CD4-positive, alpha-beta memory T cell (primary cell): ENCODE measurements at regions of chr2 and their contacts with region 1.

Region 1: GRCh38 chr2:157468931-157469708 is 25.2 kb upstream of the CYTIP start:
- DNase-seq: peak; percentile 45 to 80 (median 70)
- H3K4me3 ChIP-seq: peak overlapping the region in 1 of 2 donors; percentile 50
- H3K4me3 Mint-ChIP-seq: peak overlapping the region; percentile 49 to 83 (median 69)
- H3K27ac ChIP-seq: peak overlapping the region; percentile 71
- H3K27ac Mint-ChIP-seq: peak overlapping the region; percentile 93 to 99 (median 98)
- H3K4me1 ChIP-seq: peaks cover 49% of the 10 kb centered on the region
- H3K4me1 Mint-ChIP-seq: peaks cover 49 to 78% (median 60%) of the 10 kb centered on the region in 4 donors
- H3K27me3 ChIP-seq: no peaks in the 10 kb centered on the region
- H3K27me3 Mint-ChIP-seq: no peaks in the 10 kb centered on the region

Region 2: DNA sequence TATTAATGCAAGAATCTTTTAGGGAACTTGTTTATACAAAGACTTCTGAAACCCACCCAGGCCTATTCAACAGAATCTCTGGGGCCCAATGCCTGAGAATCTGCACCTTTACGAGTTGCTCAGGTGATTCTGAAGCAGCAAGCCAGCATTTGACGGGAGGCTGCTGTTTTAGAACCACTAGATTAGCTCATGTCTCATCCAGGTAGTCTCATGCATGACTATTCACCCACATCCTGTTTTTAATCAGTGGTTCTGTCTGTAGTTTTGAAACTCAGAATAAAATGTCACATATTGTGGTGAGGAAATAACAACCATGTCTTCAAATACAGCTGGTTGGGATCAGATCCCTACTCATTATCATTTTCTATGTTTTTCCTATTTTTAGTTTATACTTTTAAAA is 64.8 kb before region 1 on chr2:
- CTCF ChIA-PET with region 1: interaction called, 4 read pairs
- POLR2A ChIA-PET with region 1: interaction called, 6 read pairs
- intact Hi-C with region 1: loop called (anchors 2 kb)
- DNase-seq: peak; percentile 79 to 87 (median 85)
- H3K4me3 ChIP-seq: no peak overlapping the region
- H3K4me3 Mint-ChIP-seq: peak overlapping the region; percentile 49 to 85 (median 68)
- H3K27ac ChIP-seq: peak overlapping the region; percentile 51
- H3K27ac Mint-ChIP-seq: peak overlapping the region; percentile 95 to 100 (median 99)
- H3K4me1 ChIP-seq: peaks cover 60% of the 10 kb centered on the region
- H3K4me1 Mint-ChIP-seq: peaks cover 52 to 76% (median 63%) of the 10 kb centered on the region in 4 donors
- H3K27me3 ChIP-seq: no peaks in the 10 kb centered on the region
- H3K27me3 Mint-ChIP-seq: no peaks in the 10 kb centered on the region

Region 3: GRCh38 chr2:157433394-157433793 is 35.7 kb before region 1 on chr2:
- CTCF ChIA-PET with region 1: interaction called, 6 read pairs
- POLR2A ChIA-PET with region 1: interaction called, 131 read pairs
- intact Hi-C with region 1: no loop called
- DNase-seq: no peak
- H3K4me3 ChIP-seq: peak overlapping the region; percentile 8 to 56
- H3K4me3 Mint-ChIP-seq: peak overlapping the region; percentile 78 to 100 (median 92)
- H3K27ac ChIP-seq: peak overlapping the region; percentile 59
- H3K27ac Mint-ChIP-seq: peak overlapping the region; percentile 80 to 99 (median 91)
- H3K4me1 ChIP-seq: peaks cover 84% of the 10 kb centered on the region
- H3K4me1 Mint-ChIP-seq: peaks cover 62 to 96% (median 77%) of the 10 kb centered on the region in 4 donors
- H3K27me3 ChIP-seq: no peaks in the 10 kb centered on the region
- H3K27me3 Mint-ChIP-seq: no peaks in the 10 kb centered on the region